MCF 10A (cell line): ENCODE measurements at regions of chr2 and their contacts with region 1.

Region 1: GRCh38 chr2:104944495-104944894 is 90.6 kb downstream of the POU3F3 start:
- DNase-seq: peak; percentile 66
- H3K4me3 Mint-ChIP-seq: no peak overlapping the region
- H3K27ac Mint-ChIP-seq: no peak overlapping the region
- H3K4me1 Mint-ChIP-seq: peaks cover 6% of the 10 kb centered on the region
- H3K27me3 Mint-ChIP-seq: no peaks in the 10 kb centered on the region
- CTCF ChIP-seq: peak; percentile 62

Region 2: DNA sequence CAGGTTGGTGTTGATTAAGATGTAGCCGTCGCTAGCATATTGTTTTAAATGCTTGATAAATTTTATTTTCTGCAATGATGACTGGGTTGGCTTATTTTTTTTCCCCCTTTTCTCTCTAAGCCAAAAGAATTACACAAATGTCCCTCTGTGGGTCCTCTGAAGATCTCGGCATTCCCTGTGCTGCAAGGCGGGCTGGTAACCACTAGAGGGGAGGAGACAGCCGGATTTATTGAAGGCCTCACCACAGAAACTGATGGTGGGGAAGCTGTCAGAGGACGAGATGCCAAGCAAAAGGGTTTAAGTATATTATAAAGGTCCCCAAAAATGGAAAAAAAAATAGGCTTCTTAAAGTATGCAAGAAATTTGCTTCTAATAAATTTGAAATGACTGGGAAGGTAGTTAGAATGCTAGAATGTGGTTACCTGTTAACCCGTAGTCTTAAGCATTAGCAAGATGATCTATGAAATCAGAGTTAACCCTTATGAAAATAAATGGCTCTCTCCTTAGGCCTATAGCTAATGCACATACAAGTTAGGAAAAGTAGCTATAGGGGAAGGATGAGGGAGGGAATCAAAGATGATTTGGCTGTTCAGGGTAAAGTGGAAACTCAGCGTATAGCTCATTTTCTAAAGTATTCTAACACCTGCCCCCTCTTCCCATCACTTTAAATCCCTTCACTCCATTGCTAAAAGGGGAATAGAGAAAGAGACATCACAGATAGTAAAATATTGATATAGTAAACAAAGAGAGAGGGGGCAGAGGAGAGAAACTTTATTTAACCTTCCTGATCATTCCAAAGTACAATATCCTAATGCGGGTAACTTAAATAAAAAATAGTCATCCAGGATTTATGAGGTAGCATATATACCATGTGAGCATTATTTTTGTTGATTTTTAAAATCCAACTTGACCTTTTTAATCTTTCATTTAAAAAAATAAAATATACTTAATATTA is 985.0 kb before region 1 on chr2:
- CTCF ChIA-PET with region 1: interaction called, 7 read pairs
- POLR2A ChIA-PET with region 1: no interaction called
- intact Hi-C with region 1: loop called (anchors 1 kb)
- DNase-seq: peak; percentile 50
- H3K4me3 Mint-ChIP-seq: no peak overlapping the region
- H3K27ac Mint-ChIP-seq: no peak overlapping the region
- H3K4me1 Mint-ChIP-seq: no peaks in the 10 kb centered on the region
- H3K27me3 Mint-ChIP-seq: peaks cover 79% of the 10 kb centered on the region
- CTCF ChIP-seq: peak; percentile 65

Region 3: DNA sequence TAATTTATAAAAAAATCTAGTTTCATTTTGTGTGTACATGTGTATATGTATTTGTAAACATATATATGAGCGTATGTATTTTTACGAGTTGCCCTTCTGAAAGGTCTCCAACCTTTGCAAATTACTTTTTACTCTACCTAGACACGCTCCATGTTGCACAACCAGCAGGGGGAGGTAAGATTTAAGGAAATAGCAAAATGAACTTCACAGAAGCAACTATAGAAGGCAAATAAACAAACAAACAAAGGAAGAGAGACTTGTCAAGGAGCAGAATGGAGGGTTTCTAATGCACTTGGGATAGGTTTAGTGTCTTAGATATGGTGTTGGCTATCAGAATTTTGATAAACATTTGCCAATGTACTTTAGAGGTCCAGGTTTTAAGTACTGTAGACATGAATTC is 911.1 kb before region 1 on chr2:
- CTCF ChIA-PET with region 1: interaction called, 3 read pairs
- POLR2A ChIA-PET with region 1: no interaction called
- intact Hi-C with region 1: loop called (anchors 1 kb)
- DNase-seq: peak; percentile 30
- H3K4me3 Mint-ChIP-seq: no peak overlapping the region
- H3K27ac Mint-ChIP-seq: no peak overlapping the region
- H3K4me1 Mint-ChIP-seq: no peaks in the 10 kb centered on the region
- H3K27me3 Mint-ChIP-seq: peaks cover 86% of the 10 kb centered on the region
- CTCF ChIP-seq: peak; percentile 28

Region 4: DNA sequence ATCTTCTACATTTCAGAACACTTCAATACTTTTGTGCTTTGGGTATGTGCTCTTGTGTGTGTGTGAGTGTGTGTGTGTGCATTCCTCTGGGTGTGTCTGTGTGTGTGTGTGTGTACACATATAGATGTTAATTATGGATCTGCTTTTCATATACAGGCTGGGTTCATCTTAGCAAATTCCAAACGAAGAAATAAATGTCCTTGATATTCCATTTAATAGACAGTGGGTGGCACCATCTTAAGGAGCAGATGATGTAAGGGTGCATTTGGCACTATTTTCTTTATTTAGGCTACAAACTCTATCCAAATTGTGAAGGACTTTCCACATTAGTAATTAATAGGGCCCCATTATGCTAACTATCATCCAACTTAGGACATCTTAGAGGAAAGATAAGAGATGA is 516.3 kb before region 1 on chr2:
- CTCF ChIA-PET with region 1: no interaction called
- POLR2A ChIA-PET with region 1: no interaction called
- intact Hi-C with region 1: loop called (anchors 5 kb)
- DNase-seq: no peak
- H3K4me3 Mint-ChIP-seq: no peak overlapping the region
- H3K27ac Mint-ChIP-seq: no peak overlapping the region
- H3K4me1 Mint-ChIP-seq: peaks cover 6% of the 10 kb centered on the region
- H3K27me3 Mint-ChIP-seq: peaks cover 68% of the 10 kb centered on the region
- CTCF ChIP-seq: no peak